Heart right ventricle (tissue), 16 donors: ENCODE measurements at regions of chr1 and their contacts with region 1.

Region 1: GRCh38 chr1:39250460-39251240 is 46.2 kb downstream of the MACF1 start:
- DNase-seq: no peak
- ATAC-seq: no peak
- H3K4me3 ChIP-seq: no peak overlapping the region
- H3K27ac ChIP-seq: no peak overlapping the region
- H3K4me1 ChIP-seq: peaks cover 0 to 41% (median 16%) of the 10 kb centered on the region in 9 donors
- H3K27me3 ChIP-seq: no peaks in the 10 kb centered on the region
- CTCF ChIP-seq: no peak

Region 2: DNA sequence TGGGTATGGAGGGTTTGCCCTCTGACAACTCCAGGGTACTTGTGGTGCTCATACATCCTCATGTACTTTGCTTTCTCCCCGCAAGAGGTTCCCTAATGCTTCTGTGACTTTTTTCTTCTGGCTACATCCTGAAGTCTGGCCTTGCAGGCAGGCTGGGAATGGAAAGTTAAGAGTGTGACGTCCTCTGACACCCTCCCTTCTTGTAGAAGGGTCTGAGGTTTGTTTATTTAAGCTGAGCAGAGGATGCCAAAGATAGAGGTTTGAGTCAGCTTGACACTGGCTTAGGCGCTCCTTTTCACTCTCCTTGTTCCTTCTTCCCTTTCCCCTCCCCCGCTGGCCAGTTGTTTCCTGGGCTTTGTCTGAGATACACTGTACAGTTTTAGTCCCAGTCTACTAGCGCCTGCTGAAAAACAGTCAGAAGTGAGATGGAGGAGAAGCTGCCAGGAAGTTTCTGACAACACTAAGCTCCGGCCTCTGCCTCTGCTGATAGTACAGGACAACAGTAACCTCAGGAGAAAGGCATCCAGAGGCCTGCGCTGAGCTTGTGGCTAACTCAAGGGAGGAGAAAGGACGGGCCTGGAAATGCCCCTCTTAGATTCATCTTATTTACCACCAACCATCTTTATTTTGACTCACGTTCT is 46.1 kb before region 1 on chr1 and contains the start of gene MACF1:
- intact Hi-C with region 1: loop called in 6 of 10 experiments (anchors 5 kb)
- DNase-seq: peak; percentile 45 to 84
- ATAC-seq: peak; percentile 86 to 92 (median 90)
- H3K4me3 ChIP-seq: peak within 1 kb of the TSS; percentile 23 to 69 (median 48)
- H3K27ac ChIP-seq: peak within 1 kb of the TSS; percentile 77 to 98 (median 90)
- H3K4me1 ChIP-seq: peaks cover 0 to 68% (median 34%) of the 10 kb centered on the region in 9 donors
- H3K27me3 ChIP-seq: no peaks in the 10 kb centered on the region
- CTCF ChIP-seq: peak; percentile 18 to 68 (median 48)
- total RNA-seq, gene MACF1: 157 to 379 (median 325) TPM

Region 3: DNA sequence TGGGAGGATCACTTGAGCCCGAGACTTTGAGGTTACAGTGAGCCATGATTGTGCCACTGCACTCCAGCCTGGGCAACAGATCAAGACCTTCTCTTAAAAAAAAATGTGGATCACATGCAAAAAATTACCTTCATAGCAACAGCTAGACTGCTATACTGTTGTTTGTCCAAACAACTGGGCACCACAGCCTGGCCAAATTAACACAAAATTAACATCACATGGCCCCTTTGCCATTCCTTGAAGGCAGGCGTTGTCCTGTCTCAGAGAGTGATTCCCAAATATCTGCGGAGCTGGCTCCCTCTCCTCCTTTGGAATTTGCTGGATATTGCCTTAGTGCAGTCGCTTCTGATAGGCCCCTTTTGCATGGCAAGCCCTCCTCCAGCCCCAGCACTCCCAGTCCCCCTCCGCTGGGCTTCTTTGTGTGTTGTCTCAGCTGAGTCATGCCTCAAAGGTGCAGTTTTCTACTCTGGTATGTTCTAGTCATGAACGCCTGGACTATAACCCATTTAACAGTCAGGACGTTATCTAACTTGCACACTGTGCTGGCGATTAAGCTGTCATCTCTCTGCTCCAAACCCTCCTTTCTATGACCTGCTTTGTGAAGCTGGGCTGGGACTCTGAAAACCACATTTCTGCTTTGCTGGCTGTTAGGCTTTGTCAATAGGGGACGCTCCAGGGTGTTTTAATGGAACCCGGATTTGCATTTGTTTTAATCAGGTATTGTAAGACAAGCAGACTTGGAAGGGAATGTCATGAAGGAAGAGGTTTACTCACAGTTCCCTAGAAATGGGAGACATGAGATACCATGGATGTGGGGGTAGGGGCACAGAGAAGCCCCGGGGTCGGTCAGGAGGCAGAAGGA is 460.7 kb after region 1 on chr1:
- intact Hi-C with region 1: no loop called
- DNase-seq: no peak
- ATAC-seq: no peak
- H3K4me3 ChIP-seq: no peak overlapping the region
- H3K27ac ChIP-seq: no peak overlapping the region
- H3K4me1 ChIP-seq: peaks cover 0 to 3% (median 0%) of the 10 kb centered on the region in 9 donors
- H3K27me3 ChIP-seq: peaks cover 0 to 21% (median 17%) of the 10 kb centered on the region in 7 donors
- CTCF ChIP-seq: no peak